Activated CD4-positive, alpha-beta memory T cell treated with anti-CD3 and anti-CD28 coated beads, Interleukin-2, amount 10 ng/mL, durations not matched to agents 7 days and 5 days (primary cell): ENCODE measurements at regions of chr4 and their contacts with region 1.

Region 1: DNA sequence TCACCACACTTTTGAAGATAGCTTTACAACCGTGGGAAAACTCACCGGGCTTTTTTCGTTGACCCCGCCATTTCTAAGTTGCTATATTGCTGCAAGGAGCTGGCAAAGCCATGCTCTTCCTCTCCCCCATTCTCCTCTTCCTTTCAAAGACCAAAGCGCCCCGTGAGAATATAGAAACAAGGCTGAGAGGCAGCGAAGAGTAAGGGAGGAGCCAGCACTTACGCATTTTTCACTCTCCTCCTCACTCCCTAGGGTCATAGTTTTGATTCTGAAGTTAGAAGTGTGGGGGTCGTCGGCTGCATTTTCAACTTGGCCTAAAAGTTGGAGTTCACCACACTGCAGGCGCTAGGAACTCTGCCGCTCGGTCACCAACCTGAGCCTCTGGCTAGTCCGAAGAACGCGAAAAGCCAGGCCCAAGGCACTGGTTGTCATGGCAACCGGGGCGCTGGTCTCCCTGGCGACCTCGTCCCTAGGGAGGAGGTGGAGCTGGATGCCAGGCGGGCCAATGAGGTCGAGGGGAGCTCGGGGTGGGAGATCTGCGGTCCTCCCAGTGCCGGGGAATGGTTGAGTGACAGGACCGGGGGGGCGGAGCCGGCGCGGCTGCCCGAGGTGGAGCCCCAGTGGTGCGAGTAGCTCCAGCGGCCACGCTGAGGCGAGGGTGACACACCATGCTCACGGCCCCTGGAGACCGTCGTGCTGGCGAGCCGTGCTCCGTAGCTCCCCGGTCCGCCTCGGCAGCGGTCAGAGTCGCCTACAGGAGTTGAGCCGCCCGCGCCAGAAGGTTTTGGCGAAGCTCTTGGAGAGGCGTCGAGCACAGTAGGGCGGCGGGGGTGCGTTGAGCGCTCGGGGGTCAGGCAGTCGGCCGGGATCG is at the start of gene PTPN13:
- DNase-seq: peak; percentile 78
- H3K4me3 Mint-ChIP-seq: peak within 1 kb of the TSS; percentile 74
- H3K27ac Mint-ChIP-seq: peak within 1 kb of the TSS; percentile 63
- H3K4me1 Mint-ChIP-seq: peaks cover 20% of the 10 kb centered on the region
- H3K27me3 Mint-ChIP-seq: peaks cover 49% of the 10 kb centered on the region
- total RNA-seq, gene PTPN13: 4.7 to 5.3 TPM

Region 2: GRCh38 chr4:86544310-86544966 is 49.5 kb before region 1 on chr4:
- CTCF ChIA-PET with region 1: interaction called, 3 read pairs
- POLR2A ChIA-PET with region 1: interaction called, 10 read pairs
- DNase-seq: peak; percentile 47
- H3K4me3 Mint-ChIP-seq: peak overlapping the region; percentile 15
- H3K27ac Mint-ChIP-seq: peak overlapping the region; percentile 92
- H3K4me1 Mint-ChIP-seq: peaks cover 34% of the 10 kb centered on the region
- H3K27me3 Mint-ChIP-seq: peaks cover 4% of the 10 kb centered on the region

Region 3: GRCh38 chr4:86564795-86565194 is 29.1 kb before region 1 on chr4:
- CTCF ChIA-PET with region 1: no interaction called
- POLR2A ChIA-PET with region 1: no interaction called
- DNase-seq: no peak
- H3K4me3 Mint-ChIP-seq: no peak overlapping the region
- H3K27ac Mint-ChIP-seq: no peak overlapping the region
- H3K4me1 Mint-ChIP-seq: peaks cover 8% of the 10 kb centered on the region
- H3K27me3 Mint-ChIP-seq: peaks cover 4% of the 10 kb centered on the region

Region 4: GRCh38 chr4:86670739-86671138 is 76.8 kb after region 1 on chr4:
- CTCF ChIA-PET with region 1: no interaction called
- POLR2A ChIA-PET with region 1: no interaction called
- DNase-seq: no peak
- H3K4me3 Mint-ChIP-seq: no peak overlapping the region
- H3K27ac Mint-ChIP-seq: no peak overlapping the region
- H3K4me1 Mint-ChIP-seq: peaks cover 3% of the 10 kb centered on the region
- H3K27me3 Mint-ChIP-seq: no peaks in the 10 kb centered on the region